ENCODE measurements at regions of chr4 and their contacts with region 1.

Region 1: DNA sequence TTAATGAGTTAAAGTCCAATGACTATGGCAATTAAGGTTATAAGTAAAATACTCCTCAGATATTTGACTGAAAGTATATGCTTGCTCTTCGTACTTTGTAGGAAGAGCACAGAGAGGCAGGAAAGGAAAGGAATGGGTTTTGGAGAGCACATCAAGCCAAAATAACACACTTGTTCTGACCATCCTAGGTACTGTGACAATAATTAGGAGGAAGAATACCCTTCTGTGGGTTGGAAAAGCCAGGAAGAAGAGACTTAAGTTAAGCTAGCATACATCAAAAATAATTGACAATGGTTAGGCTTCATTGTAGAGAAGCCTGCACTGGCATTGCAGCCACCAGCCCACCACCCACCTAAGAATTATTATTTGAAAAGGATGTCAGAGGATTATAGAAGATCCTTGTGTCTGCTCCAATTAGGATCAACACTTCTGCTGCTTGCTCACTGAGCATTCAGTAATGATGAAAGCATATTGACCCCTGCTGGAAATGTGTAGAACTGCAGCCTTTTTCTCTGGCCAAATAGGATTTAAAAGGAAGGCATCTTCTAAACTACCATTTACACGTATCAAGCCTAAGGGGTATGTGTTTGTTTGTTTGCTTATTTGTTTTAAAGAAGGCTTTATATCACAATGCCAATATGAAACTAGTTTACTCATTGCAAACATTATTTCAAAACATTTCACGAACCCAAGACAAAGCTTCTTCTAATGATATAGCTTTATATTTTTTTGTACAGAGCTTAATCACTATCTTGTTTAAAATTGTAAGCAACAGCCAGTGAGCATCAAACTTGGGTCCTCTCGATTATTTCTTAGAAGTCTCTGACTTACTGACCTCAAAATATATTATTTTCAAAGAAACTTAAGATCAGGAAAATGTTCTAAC is 286.2 kb upstream of the TET2 start:
- DNase-seq: peak; percentile 67
- H3K4me3 ChIP-seq: no peak overlapping the region
- H3K27ac ChIP-seq: no peak overlapping the region
- H3K4me1 ChIP-seq: no peaks in the 10 kb centered on the region
- H3K27me3 ChIP-seq: no peaks in the 10 kb centered on the region
- CTCF ChIP-seq: peak; percentile 54 to 61
- POLR2A ChIP-seq: no peak

Region 2: GRCh38 chr4:103934178-103934789 is 926.2 kb before region 1 on chr4:
- CTCF ChIA-PET with region 1: no interaction called
- POLR2A ChIA-PET with region 1: no interaction called
- dilution Hi-C with region 1: no loop called
- intact Hi-C with region 1: loop called (anchors 5 kb)
- DNase-seq: peak; percentile 43
- H3K4me3 ChIP-seq: no peak overlapping the region
- H3K27ac ChIP-seq: no peak overlapping the region
- H3K4me1 ChIP-seq: no peaks in the 10 kb centered on the region
- H3K27me3 ChIP-seq: no peaks in the 10 kb centered on the region
- CTCF ChIP-seq: peak; percentile 37 to 42
- POLR2A ChIP-seq: no peak

Region 3: GRCh38 chr4:104064646-104065577 is 795.6 kb before region 1 on chr4:
- CTCF ChIA-PET with region 1: no interaction called
- POLR2A ChIA-PET with region 1: no interaction called
- dilution Hi-C with region 1: no loop called
- intact Hi-C with region 1: loop called (anchors 1 kb)
- DNase-seq: peak; percentile 4
- H3K4me3 ChIP-seq: no peak overlapping the region
- H3K27ac ChIP-seq: no peak overlapping the region
- H3K4me1 ChIP-seq: no peaks in the 10 kb centered on the region
- H3K27me3 ChIP-seq: no peaks in the 10 kb centered on the region
- CTCF ChIP-seq: peak in 1 of 2 donors; percentile 22
- POLR2A ChIP-seq: no peak

Region 4: GRCh38 chr4:106507440-106507839 is 1647.0 kb after region 1 on chr4:
- CTCF ChIA-PET with region 1: no interaction called
- POLR2A ChIA-PET with region 1: no interaction called
- dilution Hi-C with region 1: no loop called
- intact Hi-C with region 1: no loop called
- DNase-seq: no peak
- H3K4me3 ChIP-seq: no peak overlapping the region
- H3K27ac ChIP-seq: no peak overlapping the region
- H3K4me1 ChIP-seq: no peaks in the 10 kb centered on the region
- H3K27me3 ChIP-seq: no peaks in the 10 kb centered on the region
- CTCF ChIP-seq: no peak
- POLR2A ChIP-seq: no peak

Measured in endothelial cell of umbilical vein (primary cell).